Activated B cell treated with CpG ODN at 0.5 μM for 24 hours (primary cell): ENCODE measurements at regions of chr7 and their contacts with region 1.

Region 1: GRCh38 chr7:100190048-100190711 is 12.5 kb downstream of the STAG3 start:
- DNase-seq: no peak
- ATAC-seq: peak; percentile 74
- H3K4me3 Mint-ChIP-seq: peak overlapping the region; percentile 32
- H3K27ac Mint-ChIP-seq: peak overlapping the region; percentile 91
- H3K4me1 Mint-ChIP-seq: peaks cover 57% of the 10 kb centered on the region
- H3K27me3 Mint-ChIP-seq: no peaks in the 10 kb centered on the region
- CTCF ChIP-seq: no peak

Region 2: DNA sequence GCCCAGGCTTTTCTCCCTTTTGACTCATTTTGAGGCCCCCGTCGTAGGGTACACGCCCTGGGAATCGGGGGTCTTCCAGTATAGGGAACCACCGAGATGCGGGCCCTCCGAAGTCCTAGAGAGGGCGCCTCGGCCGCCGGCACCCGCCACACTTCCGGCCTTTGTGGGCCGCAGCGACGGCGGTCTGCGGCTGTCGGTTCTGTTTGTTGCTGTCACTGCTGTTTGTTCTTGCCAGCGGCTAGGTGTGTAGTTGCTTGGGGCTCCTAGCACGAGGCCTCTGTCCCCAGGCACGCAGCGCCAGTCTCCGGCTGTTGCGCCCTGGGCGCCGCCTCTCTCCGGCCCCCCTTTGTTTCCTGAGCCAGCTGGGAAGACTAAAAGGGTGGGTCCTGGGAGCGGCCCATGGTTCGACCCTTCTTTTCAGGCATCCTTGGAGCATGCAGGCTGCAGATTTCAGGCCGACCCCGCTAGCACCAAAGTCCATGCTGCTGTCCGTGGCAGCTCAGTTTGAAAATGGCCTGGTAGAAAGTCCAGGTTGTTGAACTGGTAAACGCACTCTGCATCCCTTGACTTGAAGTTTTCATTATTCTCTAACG is 192.5 kb before region 1 on chr7:
- CTCF ChIA-PET with region 1: no interaction called
- POLR2A ChIA-PET with region 1: no interaction called
- intact Hi-C with region 1: no loop called
- DNase-seq: peak; percentile 60
- ATAC-seq: peak; percentile 92
- H3K4me3 Mint-ChIP-seq: peak overlapping the region; percentile 80
- H3K27ac Mint-ChIP-seq: peak overlapping the region; percentile 85
- H3K4me1 Mint-ChIP-seq: peaks cover 12% of the 10 kb centered on the region
- H3K27me3 Mint-ChIP-seq: peaks cover 1% of the 10 kb centered on the region
- CTCF ChIP-seq: no peak

Region 3: DNA sequence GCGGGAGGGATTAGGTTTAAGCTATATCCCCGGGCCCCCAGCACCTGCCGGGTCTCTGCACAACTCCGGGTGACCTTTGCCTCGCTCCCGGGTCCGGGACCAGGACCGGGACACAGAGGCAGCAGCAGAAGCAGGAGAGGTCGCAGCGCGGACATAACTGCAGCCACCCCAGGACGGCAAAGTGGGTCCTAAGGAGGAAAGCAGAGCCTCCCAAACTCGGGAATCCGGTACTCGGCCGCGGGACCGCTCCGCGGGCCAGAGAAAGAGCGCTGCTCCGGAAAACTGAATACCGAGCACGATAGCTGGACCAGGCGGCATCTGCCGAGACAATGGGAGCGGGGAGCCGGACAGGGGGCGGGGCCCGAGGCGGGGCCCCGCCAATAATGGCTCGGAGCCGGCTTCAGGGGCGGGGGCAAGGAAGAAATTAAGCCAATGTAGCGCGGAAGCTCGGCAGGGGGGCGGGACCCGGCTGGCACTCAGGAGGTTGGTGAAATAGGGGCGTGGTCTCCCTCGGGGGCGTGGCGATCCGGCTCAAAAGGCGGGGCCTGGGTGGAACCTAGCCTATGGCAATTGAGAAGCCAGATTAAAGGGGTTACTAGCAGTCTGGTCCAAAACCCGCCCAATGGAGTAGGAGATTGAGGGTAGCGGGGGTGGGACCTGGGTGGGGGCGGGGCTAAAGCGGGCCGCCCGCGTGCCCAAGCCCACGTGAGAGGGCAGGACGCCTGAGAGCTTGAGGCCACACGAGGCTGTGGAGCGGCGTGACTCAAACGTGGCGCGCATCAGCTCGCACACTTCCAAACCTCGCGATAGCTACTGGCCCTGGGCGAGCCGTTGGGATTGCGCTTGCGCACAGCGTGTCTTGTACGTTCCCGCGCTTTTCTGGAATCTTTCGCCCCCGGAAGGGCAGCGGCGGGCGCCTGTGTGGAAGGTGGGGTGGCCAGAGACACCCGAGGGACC is 12.9 kb before region 1 on chr7 and contains the starts of genes GPC2 and STAG3:
- CTCF ChIA-PET with region 1: interaction called, 5 read pairs
- POLR2A ChIA-PET with region 1: interaction called, 12 read pairs
- intact Hi-C with region 1: loop called (anchors 2 kb)
- DNase-seq: peak; percentile 97
- ATAC-seq: peak; percentile 95
- H3K4me3 Mint-ChIP-seq: peak within 1 kb of the TSS; percentile 84
- H3K27ac Mint-ChIP-seq: peak within 1 kb of the TSS; percentile 68
- H3K4me1 Mint-ChIP-seq: peaks cover 21% of the 10 kb centered on the region
- H3K27me3 Mint-ChIP-seq: peaks cover 4% of the 10 kb centered on the region
- CTCF ChIP-seq: no peak
- total RNA-seq, gene GPC2: 5.0 and 5.1 TPM in 2 replicates
- total RNA-seq, gene STAG3: 41.3 and 42.4 TPM in 2 replicates

Region 4: GRCh38 chr7:100200693-100201092 is 10.5 kb after region 1 on chr7:
- CTCF ChIA-PET with region 1: interaction called, 12 read pairs
- POLR2A ChIA-PET with region 1: interaction called, 17 read pairs
- intact Hi-C with region 1: loop called (anchors 1 kb)
- DNase-seq: no peak
- ATAC-seq: no peak
- H3K4me3 Mint-ChIP-seq: peak overlapping the region; percentile 77
- H3K27ac Mint-ChIP-seq: peak overlapping the region; percentile 94
- H3K4me1 Mint-ChIP-seq: peaks cover 63% of the 10 kb centered on the region
- H3K27me3 Mint-ChIP-seq: no peaks in the 10 kb centered on the region
- CTCF ChIP-seq: no peak

Region 5: DNA sequence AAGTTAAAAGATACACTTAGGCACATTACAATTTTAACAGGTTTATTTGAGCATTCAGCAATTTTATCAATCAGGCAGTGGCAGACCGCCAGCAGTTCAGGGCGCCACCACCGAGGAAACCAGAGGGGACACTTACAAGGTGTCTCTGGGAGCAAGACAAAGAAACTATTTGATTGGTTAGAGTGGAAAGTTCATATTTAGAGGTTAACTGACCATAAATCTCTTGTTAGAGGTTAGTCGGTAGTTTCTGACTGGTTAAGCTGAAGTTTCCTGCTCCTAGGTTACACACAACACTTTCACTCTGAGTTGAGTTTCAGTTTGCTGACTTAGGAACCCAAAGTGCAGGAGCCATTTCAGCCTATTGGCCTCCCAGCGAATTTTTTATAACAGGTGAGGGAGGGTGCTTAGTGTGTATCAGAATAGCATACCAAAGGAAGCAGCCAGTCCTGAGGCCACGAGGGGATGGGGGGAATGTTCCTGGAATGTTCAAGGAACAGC is 18.8 kb after region 1 on chr7:
- CTCF ChIA-PET with region 1: interaction called, 30 read pairs
- POLR2A ChIA-PET with region 1: interaction called, 39 read pairs
- intact Hi-C with region 1: loop called (anchors 1 kb)
- DNase-seq: no peak
- ATAC-seq: peak; percentile 61
- H3K4me3 Mint-ChIP-seq: peak overlapping the region; percentile 64
- H3K27ac Mint-ChIP-seq: peak overlapping the region; percentile 82
- H3K4me1 Mint-ChIP-seq: peaks cover 67% of the 10 kb centered on the region
- H3K27me3 Mint-ChIP-seq: no peaks in the 10 kb centered on the region
- CTCF ChIP-seq: no peak

Region 6: GRCh38 chr7:100215895-100216294 is 25.7 kb after region 1 on chr7:
- CTCF ChIA-PET with region 1: interaction called, 33 read pairs
- POLR2A ChIA-PET with region 1: interaction called, 39 read pairs
- intact Hi-C with region 1: loop called (anchors 1 kb)
- DNase-seq: no peak
- ATAC-seq: no peak
- H3K4me3 Mint-ChIP-seq: no peak overlapping the region
- H3K27ac Mint-ChIP-seq: peak overlapping the region; percentile 81
- H3K4me1 Mint-ChIP-seq: peaks cover 89% of the 10 kb centered on the region
- H3K27me3 Mint-ChIP-seq: no peaks in the 10 kb centered on the region
- CTCF ChIP-seq: no peak

Region 7: GRCh38 chr7:100221231-100221718 is 31.1 kb after region 1 on chr7:
- CTCF ChIA-PET with region 1: interaction called, 33 read pairs
- POLR2A ChIA-PET with region 1: interaction called, 14 read pairs
- intact Hi-C with region 1: loop called (anchors 1 kb)
- DNase-seq: peak; percentile 48
- ATAC-seq: peak; percentile 40
- H3K4me3 Mint-ChIP-seq: peak overlapping the region; percentile 86
- H3K27ac Mint-ChIP-seq: peak overlapping the region; percentile 95
- H3K4me1 Mint-ChIP-seq: peaks cover 84% of the 10 kb centered on the region
- H3K27me3 Mint-ChIP-seq: no peaks in the 10 kb centered on the region
- CTCF ChIP-seq: no peak

Region 8: DNA sequence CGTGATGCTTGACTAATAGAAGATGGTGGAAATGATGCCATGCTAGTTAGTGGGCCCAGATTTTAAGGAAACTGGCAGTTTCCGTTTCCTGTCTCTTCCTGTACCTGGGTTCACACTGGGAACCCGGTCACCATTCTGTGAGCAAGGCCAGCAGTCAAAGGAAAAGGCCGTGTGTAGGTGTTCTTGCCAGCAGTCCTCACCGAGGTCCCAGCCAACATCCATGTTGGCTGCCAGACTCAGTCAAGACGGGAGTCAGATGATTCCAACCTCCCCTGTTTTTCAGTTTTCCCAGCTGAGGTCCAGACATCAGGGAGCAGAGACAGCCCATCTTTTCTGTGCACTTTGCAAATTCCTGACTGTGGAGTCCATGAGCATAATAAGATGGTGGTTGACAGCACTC is 152.6 kb after region 1 on chr7:
- CTCF ChIA-PET with region 1: interaction called, 4 read pairs
- POLR2A ChIA-PET with region 1: interaction called, 8 read pairs
- intact Hi-C with region 1: loop called (anchors 10 kb)
- DNase-seq: no peak
- ATAC-seq: no peak
- H3K4me3 Mint-ChIP-seq: no peak overlapping the region
- H3K27ac Mint-ChIP-seq: peak overlapping the region; percentile 76
- H3K4me1 Mint-ChIP-seq: peaks cover 43% of the 10 kb centered on the region
- H3K27me3 Mint-ChIP-seq: no peaks in the 10 kb centered on the region
- CTCF ChIP-seq: no peak

Region 9: GRCh38 chr7:100358027-100358865 is 168.1 kb after region 1 on chr7 and contains the start of gene PILRB:
- CTCF ChIA-PET with region 1: no interaction called
- POLR2A ChIA-PET with region 1: no interaction called
- intact Hi-C with region 1: no loop called
- DNase-seq: no peak
- ATAC-seq: peak; percentile 90
- H3K4me3 Mint-ChIP-seq: no peak within 1 kb of the TSS
- H3K27ac Mint-ChIP-seq: peak within 1 kb of the TSS; percentile 63
- H3K4me1 Mint-ChIP-seq: peaks cover 26% of the 10 kb centered on the region
- H3K27me3 Mint-ChIP-seq: no peaks in the 10 kb centered on the region
- CTCF ChIP-seq: no peak
- total RNA-seq, gene PILRB: 65.8 and 79.4 TPM in 2 replicates

Region 10: GRCh38 chr7:100655908-100656674 is 465.9 kb after region 1 on chr7 and contains the start of gene ACTL6B:
- CTCF ChIA-PET with region 1: no interaction called
- POLR2A ChIA-PET with region 1: no interaction called
- intact Hi-C with region 1: no loop called
- DNase-seq: no peak
- ATAC-seq: peak; percentile 42
- H3K4me3 Mint-ChIP-seq: no peak within 1 kb of the TSS
- H3K27ac Mint-ChIP-seq: no peak within 1 kb of the TSS
- H3K4me1 Mint-ChIP-seq: no peaks in the 10 kb centered on the region
- H3K27me3 Mint-ChIP-seq: peaks cover 36% of the 10 kb centered on the region
- CTCF ChIP-seq: no peak
- total RNA-seq, gene ACTL6B: not detected in 2 replicates